Adrenal gland (tissue), 19 donors: ENCODE measurements at regions of chr5 and their contacts with region 1.

Region 1: DNA sequence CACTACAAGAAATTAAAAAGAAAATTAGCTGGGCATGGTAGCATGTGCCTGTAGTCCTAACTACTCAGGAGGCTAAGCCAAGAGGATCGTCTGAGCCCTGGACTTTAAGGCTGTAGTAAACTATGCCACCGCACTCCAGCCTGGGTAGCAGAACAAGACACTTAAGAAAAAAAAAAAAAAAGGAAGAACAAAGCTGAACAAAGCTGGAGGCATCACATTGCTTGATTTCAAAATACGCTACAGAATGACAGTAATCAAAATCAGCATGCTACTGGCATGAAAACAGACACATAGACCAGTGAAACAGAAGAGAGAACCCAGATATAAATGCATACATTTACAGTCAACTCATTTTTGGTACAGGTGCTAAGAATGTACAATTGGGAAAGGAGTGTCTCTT is 14.5 kb upstream of the OTULIN start:
- DNase-seq: no peak
- H3K4me3 ChIP-seq: no peak overlapping the region
- H3K27ac ChIP-seq: no peak overlapping the region
- H3K4me1 ChIP-seq: peaks cover 0 to 3% of the 10 kb centered on the region in 2 donors
- H3K27me3 ChIP-seq: no peaks in the 10 kb centered on the region
- CTCF ChIP-seq: no peak
- POLR2A ChIP-seq: no peak

Region 2: GRCh38 chr5:14399054-14399692 is 250.9 kb before region 1 on chr5:
- intact Hi-C with region 1: loop called in 1 of 2 experiments (anchors 5 kb)
- DNase-seq: peak in 1 of 7 donors; percentile 47
- H3K4me3 ChIP-seq: no peak overlapping the region
- H3K27ac ChIP-seq: no peak overlapping the region
- H3K4me1 ChIP-seq: peaks cover 6 to 15% of the 10 kb centered on the region in 2 donors
- H3K27me3 ChIP-seq: no peaks in the 10 kb centered on the region
- CTCF ChIP-seq: peak; percentile 52 to 78 (median 63)
- POLR2A ChIP-seq: no peak